BJ (cell line): ENCODE measurements at regions of chr19 and their contacts with region 1.

Region 1: GRCh38 chr19:33778089-33778791 is 18.4 kb upstream of the KCTD15 start:
- DNase-seq: no peak
- H3K4me3 ChIP-seq: no peak overlapping the region
- H3K27me3 ChIP-seq: 0 out of 2 replicates have a peak, but pooled peaks cover 2% of the 10 kb centered on the region
- CTCF ChIP-seq: peak; percentile 99

Region 2: GRCh38 chr19:32902448-32902847 is 875.8 kb before region 1 on chr19:
- CTCF ChIA-PET with region 1: no interaction called
- POLR2A ChIA-PET with region 1: no interaction called
- DNase-seq: no peak
- H3K4me3 ChIP-seq: no peak overlapping the region
- H3K27me3 ChIP-seq: no peaks in the 10 kb centered on the region
- CTCF ChIP-seq: no peak

Region 3: GRCh38 chr19:33416307-33417215 is 361.7 kb before region 1 on chr19:
- CTCF ChIA-PET with region 1: interaction called, 120 read pairs
- POLR2A ChIA-PET with region 1: no interaction called
- DNase-seq: no peak
- H3K4me3 ChIP-seq: no peak overlapping the region
- H3K27me3 ChIP-seq: no peaks in the 10 kb centered on the region
- CTCF ChIP-seq: peak; percentile 76

Region 4: DNA sequence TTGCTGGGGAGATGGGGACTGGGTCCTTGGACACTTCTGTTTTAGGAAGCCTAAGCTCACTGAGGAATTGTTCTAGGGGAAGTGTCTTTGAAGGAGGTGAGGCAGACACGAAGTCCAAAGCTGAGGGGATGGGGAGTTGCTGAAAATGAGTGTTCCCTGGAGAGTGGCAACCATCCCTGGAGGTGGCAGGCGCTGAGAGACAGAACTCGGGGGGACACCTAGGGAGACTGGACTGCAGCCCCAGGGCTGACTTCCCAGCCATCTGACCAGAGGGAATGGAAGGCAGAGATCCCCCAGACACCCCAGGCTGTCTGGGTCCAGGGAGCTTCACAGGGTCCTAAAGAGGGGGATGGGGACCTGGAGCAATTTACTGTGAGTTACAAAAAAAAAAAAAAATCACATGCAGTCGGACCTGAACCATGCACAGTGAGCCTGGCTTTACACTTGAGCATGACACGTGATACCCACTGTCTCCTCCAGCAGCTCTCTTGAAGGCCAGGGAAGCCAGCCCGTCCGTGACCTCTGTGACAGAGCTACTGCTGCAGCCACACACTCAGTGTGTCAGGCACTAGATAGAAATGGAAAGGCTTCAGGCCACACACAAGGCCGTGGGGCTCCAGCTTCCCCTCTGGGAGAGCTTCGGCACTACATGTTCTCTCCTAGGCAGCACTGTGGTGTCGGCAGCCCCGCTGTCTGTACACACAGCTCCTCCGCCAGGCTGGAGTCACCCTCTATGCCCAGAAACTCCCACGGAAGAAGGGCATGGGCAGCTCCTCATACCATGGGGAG is 58.7 kb before region 1 on chr19:
- CTCF ChIA-PET with region 1: no interaction called
- POLR2A ChIA-PET with region 1: no interaction called
- DNase-seq: no peak
- H3K4me3 ChIP-seq: no peak overlapping the region
- H3K27me3 ChIP-seq: no peaks in the 10 kb centered on the region
- CTCF ChIP-seq: no peak

Region 5: DNA sequence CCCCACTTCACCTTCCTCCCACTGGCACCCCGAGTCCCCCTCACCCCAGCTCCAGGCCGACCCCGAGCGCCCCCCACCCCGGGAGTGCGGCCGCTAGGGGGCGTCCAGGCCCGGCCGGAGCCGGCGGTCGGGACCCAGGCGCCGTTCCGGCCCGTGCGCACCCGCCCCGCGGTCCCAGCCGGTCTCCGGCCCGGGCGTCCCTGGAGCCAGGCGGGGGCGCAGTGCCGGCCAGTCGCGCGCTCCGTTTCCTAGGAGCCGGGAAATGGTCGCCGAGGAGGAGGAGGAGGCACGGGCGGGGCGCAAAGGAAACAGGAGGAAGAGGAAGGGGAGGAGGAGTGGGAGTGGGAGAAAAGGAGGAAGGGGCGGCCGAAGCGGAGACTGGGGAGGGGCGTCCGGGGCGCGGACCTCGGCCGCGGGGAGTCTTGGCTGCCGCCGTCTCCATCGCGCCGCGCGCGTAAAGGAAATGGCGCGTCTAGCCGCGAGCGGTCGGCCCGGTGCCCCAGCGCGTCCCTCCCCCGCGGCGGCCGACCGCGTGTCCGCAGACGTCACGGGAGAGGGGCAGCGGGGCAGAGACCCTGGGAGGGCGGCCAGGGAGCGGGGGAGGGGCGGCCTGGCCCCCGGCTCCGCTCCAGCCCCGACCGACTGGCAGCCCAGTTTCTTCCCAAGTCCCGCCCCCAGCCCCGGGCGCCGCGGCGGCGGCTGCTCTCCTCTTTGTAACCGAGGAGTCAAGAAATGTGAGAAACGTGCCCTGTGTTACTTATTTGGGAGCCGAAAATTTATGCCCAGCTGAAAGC is 17.3 kb after region 1 on chr19:
- CTCF ChIA-PET with region 1: interaction called, 57 read pairs
- POLR2A ChIA-PET with region 1: no interaction called
- DNase-seq: peak; percentile 27
- H3K4me3 ChIP-seq: peak overlapping the region; percentile 69
- H3K27me3 ChIP-seq: peaks cover 4% of the 10 kb centered on the region; the same call in 1 of the 2 replicates
- CTCF ChIP-seq: peak; percentile 69

Region 6: GRCh38 chr19:33998739-33999345 is 220.6 kb after region 1 on chr19:
- CTCF ChIA-PET with region 1: interaction called, 85 read pairs
- POLR2A ChIA-PET with region 1: no interaction called
- DNase-seq: no peak
- H3K4me3 ChIP-seq: no peak overlapping the region
- H3K27me3 ChIP-seq: no peaks in the 10 kb centered on the region
- CTCF ChIP-seq: peak; percentile 20; the same call in 1 of the 2 replicates

Region 7: DNA sequence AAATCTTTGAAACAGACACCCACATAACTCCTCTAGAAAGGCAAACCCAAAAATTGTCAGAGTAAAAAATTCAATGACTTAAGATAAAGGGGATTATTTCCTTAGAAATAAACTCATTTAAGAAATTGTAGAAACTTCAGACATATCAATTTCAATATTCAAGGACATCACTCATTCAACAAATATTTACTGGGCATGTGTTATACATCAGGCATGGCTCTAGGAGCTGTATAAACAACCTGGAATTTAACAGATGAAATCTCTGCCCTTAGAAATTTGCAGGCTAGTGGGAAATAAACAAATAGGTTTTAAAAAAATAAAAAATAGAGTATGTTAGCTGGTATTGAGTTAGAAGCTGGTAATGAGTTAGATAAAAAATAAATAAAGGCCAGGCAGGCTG is 310.1 kb after region 1 on chr19:
- CTCF ChIA-PET with region 1: interaction called, 14 read pairs
- POLR2A ChIA-PET with region 1: no interaction called
- DNase-seq: no peak
- H3K4me3 ChIP-seq: no peak overlapping the region
- H3K27me3 ChIP-seq: no peaks in the 10 kb centered on the region
- CTCF ChIP-seq: no peak

Region 8: DNA sequence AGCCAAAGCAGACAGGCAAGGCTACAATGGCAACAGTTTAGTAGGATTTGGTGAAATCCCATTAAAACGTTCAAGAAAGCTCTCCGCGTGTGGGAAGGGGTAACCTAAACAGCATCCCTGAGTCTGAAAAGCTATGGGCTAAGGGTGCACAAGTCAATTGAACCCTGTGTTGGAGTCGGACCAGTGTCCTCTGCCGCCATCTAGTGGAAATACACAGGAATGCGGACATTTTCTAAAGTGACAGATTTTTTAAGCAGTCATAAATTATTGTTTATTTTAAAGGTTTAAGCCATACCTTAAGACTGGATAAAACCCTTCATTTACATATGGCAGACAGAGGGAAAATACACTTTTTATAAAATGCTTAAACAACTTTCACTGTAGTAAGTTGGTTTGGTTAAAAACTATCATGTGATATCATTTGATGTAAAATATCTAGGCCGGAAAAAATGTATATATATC is 367.5 kb after region 1 on chr19:
- CTCF ChIA-PET with region 1: interaction called, 11 read pairs
- POLR2A ChIA-PET with region 1: no interaction called
- DNase-seq: no peak
- H3K4me3 ChIP-seq: no peak overlapping the region
- H3K27me3 ChIP-seq: peaks cover 1% of the 10 kb centered on the region; the same call in 1 of the 2 replicates
- CTCF ChIP-seq: peak; percentile 80